Panc1 (cell line): ENCODE measurements at regions of chr1 and their contacts with region 1.

Region 1: GRCh38 chr1:54764133-54764921 is at the start of gene PARS2:
- DNase-seq: peak; percentile 99
- ATAC-seq: peak; percentile 98
- H3K4me3 ChIP-seq: peak within 1 kb of the TSS; percentile 76 to 100
- H3K27ac ChIP-seq: peak within 1 kb of the TSS; percentile 92
- H3K4me1 ChIP-seq: peaks cover 3% of the 10 kb centered on the region; the same call in 1 of the 2 replicates
- H3K27me3 ChIP-seq: no peaks in the 10 kb centered on the region
- CTCF ChIP-seq: no peak
- total RNA-seq, gene PARS2: 4.4 TPM

Region 2: GRCh38 chr1:53369034-53369750 is 1395.1 kb before region 1 on chr1:
- CTCF ChIA-PET with region 1: no interaction called
- POLR2A ChIA-PET with region 1: interaction called, 10 read pairs
- in situ Hi-C with region 1: no loop called
- intact Hi-C with region 1: no loop called
- DNase-seq: no peak
- ATAC-seq: no peak; the same call in 1 of the 2 replicates
- H3K4me3 ChIP-seq: no peak overlapping the region
- H3K27ac ChIP-seq: no peak overlapping the region
- H3K4me1 ChIP-seq: no peaks in the 10 kb centered on the region
- H3K27me3 ChIP-seq: no peaks in the 10 kb centered on the region
- CTCF ChIP-seq: no peak

Region 3: DNA sequence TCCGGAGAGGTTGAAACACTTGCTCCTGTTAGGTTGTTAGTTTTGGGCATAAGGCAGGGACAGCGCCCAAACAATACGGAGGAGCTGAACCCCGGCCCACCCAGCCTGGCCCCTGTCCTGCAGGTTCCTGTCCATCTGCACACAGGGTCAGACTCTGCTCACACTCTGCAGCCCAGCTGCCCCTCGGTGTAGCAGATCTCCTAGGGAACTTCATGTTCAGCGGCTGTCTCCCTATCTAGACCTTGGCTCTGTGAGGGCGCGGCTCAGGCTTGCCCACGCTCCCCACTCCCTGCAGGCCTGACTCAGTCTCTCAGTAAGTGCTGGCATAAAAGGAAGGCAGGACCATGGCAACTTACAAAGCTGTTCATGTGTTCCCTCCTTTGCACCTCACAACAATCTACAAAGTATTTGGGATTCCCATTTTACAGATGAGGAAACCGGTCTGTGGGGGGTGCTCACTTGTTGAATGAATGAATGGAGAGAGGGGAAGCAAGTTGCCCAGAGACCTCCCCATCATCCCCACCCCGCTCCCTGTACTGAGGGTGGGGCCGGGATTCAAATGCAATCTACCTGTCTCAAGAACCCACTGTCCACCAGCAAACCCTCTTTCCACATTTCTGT is 190.1 kb before region 1 on chr1:
- CTCF ChIA-PET with region 1: interaction called, 11 read pairs
- POLR2A ChIA-PET with region 1: no interaction called
- in situ Hi-C with region 1: no loop called
- intact Hi-C with region 1: no loop called
- DNase-seq: no peak
- ATAC-seq: no peak
- H3K4me3 ChIP-seq: no peak overlapping the region
- H3K27ac ChIP-seq: no peak overlapping the region
- H3K4me1 ChIP-seq: no peaks in the 10 kb centered on the region
- H3K27me3 ChIP-seq: no peaks in the 10 kb centered on the region
- CTCF ChIP-seq: no peak

Region 4: DNA sequence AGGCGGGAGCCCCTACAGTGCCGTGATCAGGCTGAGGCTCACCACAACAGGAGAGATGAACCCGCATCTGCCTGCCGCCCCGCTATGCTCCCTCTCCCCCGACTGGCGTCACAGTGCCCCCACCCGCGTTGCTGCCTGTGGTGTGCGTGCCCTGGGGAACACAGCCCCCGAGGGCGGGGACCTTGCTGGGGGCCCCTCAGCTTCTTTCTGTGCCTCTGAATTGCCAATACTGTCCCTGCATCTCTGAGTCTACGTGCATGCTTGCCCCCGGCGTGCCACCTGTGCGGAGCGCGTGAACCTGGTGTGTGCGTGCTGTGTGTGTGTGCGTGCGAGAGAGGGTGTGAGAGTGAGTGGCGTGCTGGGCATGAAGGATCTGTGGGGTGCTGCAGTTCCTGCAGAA is 10.3 kb before region 1 on chr1:
- CTCF ChIA-PET with region 1: no interaction called
- POLR2A ChIA-PET with region 1: no interaction called
- in situ Hi-C with region 1: no loop called
- intact Hi-C with region 1: no loop called
- DNase-seq: no peak
- ATAC-seq: no peak
- H3K4me3 ChIP-seq: no peak overlapping the region
- H3K27ac ChIP-seq: no peak overlapping the region
- H3K4me1 ChIP-seq: no peaks in the 10 kb centered on the region
- H3K27me3 ChIP-seq: no peaks in the 10 kb centered on the region
- CTCF ChIP-seq: no peak

Region 5: DNA sequence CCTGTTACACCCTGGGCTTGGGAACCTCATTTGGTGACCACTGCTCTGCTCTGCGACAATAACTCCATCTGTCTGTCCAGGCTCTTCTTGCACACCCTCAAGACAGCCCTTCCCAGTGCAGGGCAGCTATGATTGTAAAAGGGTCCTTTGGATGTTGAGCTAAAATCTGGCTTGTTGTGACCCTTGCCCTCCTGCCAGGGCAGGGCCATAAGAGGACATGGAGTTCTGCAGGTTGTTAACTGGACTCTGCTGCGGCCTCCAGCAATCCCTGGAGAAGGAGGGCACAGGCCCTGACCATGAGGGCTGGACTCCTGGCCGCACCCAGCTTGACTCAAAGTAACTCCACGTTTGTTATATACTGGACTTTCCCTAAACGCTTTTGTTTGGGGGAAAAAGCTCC is 81.4 kb after region 1 on chr1:
- CTCF ChIA-PET with region 1: interaction called, 11 read pairs
- POLR2A ChIA-PET with region 1: no interaction called
- in situ Hi-C with region 1: no loop called
- intact Hi-C with region 1: no loop called
- DNase-seq: no peak
- ATAC-seq: no peak
- H3K4me3 ChIP-seq: no peak overlapping the region
- H3K27ac ChIP-seq: no peak overlapping the region
- H3K4me1 ChIP-seq: no peaks in the 10 kb centered on the region
- H3K27me3 ChIP-seq: no peaks in the 10 kb centered on the region
- CTCF ChIP-seq: no peak